H1 (cell line): ENCODE measurements at regions of chr4 and their contacts with region 1.

Region 1: GRCh38 chr4:39134683-39135319 is 47.5 kb upstream of the WDR19 start:
- DNase-seq: no peak
- H3K4me3 ChIP-seq: no peak overlapping the region
- H3K27ac ChIP-seq: no peak overlapping the region
- H3K4me1 ChIP-seq: peaks cover 0 to 3% (median 0%) of the 10 kb centered on the region in 4 experiments; a peak in 1 of 7 replicates
- H3K27me3 ChIP-seq: no peaks in the 10 kb centered on the region
- CTCF ChIP-seq: no peak
- EP300 ChIP-seq: no peak
- POLR2A ChIP-seq: no peak
- RAD21 ChIP-seq: no peak

Region 2: DNA sequence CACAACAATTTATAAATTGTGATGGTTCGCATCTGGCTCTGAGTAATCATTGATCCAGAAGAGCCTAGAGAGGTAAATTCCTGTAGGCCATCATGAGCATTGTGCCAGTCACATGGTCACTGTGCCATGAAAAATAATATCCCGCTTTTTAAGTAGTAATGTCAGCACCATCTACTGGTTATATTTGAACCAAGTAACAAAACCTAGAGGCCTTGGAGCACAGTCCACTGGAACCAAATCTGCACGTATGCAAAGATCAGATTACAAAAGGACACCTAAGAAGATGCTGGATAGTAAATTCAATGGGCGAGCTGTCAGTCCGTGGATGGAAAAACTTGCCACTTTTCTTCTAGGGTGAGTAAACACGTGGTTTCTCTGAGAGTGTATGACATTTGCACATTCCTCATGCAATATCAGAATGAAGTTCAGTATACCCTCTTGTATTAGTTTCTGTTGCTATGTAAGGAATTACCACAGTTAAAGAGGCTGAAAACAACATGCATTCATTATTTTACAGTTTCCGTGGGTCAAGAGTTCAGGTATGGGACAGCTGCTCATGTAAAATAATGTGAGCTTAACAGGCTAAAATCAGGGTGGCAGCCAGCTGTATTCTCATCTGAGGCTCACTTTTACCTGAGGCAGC is 240.3 kb before region 1 on chr4:
- CTCF ChIA-PET with region 1: interaction called, 35 read pairs
- POLR2A ChIA-PET with region 1: no interaction called
- DNase-seq: no peak
- H3K4me3 ChIP-seq: no peak overlapping the region
- H3K27ac ChIP-seq: no peak overlapping the region
- H3K4me1 ChIP-seq: no peaks in the 10 kb centered on the region
- H3K27me3 ChIP-seq: no peaks in the 10 kb centered on the region
- CTCF ChIP-seq: no peak
- EP300 ChIP-seq: no peak
- POLR2A ChIP-seq: no peak
- RAD21 ChIP-seq: no peak

Region 3: DNA sequence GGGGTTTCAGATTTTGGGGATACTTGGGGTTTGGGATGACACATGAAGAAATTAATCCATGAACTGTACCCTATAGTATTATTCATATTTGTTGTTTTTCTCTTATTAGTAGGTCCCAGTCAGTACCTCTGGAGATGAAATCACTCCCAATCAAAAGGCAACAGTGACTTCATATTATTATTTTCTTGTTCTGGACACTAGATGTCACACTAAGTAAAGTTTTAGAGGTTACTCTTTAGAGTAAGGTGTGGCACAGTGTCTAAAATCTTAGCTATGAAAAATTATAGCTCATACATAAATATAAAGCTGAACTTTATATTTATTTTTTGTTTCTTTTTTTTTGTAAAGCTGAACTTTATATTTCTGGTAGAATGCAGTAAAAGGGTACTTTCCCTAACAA is 232.1 kb before region 1 on chr4:
- CTCF ChIA-PET with region 1: interaction called, 38 read pairs
- POLR2A ChIA-PET with region 1: no interaction called
- DNase-seq: no peak
- H3K4me3 ChIP-seq: no peak overlapping the region
- H3K27ac ChIP-seq: no peak overlapping the region
- H3K4me1 ChIP-seq: no peaks in the 10 kb centered on the region
- H3K27me3 ChIP-seq: no peaks in the 10 kb centered on the region
- CTCF ChIP-seq: peak in 2 of 3 experiments; percentile 4 to 10; a peak in 2 of 4 replicates
- EP300 ChIP-seq: no peak
- POLR2A ChIP-seq: no peak
- RAD21 ChIP-seq: peak; percentile 48 to 55

Region 4: GRCh38 chr4:39157520-39157919 is 22.7 kb after region 1 on chr4:
- CTCF ChIA-PET with region 1: no interaction called
- POLR2A ChIA-PET with region 1: no interaction called
- DNase-seq: no peak
- H3K4me3 ChIP-seq: no peak overlapping the region
- H3K27ac ChIP-seq: no peak overlapping the region
- H3K4me1 ChIP-seq: no peaks in the 10 kb centered on the region
- H3K27me3 ChIP-seq: no peaks in the 10 kb centered on the region
- CTCF ChIP-seq: no peak
- EP300 ChIP-seq: no peak
- POLR2A ChIP-seq: no peak
- RAD21 ChIP-seq: no peak